Calu3 (cell line): ENCODE measurements at regions of chr3 and their contacts with region 1.

Region 1: GRCh38 chr3:132006605-132007204 is 28.1 kb downstream of the CPNE4 start:
- DNase-seq: peak; percentile 78
- H3K4me3 Mint-ChIP-seq: no peak overlapping the region
- H3K27ac Mint-ChIP-seq: no peak overlapping the region
- H3K4me1 Mint-ChIP-seq: peaks cover 33% of the 10 kb centered on the region
- H3K27me3 Mint-ChIP-seq: no peaks in the 10 kb centered on the region
- CTCF ChIP-seq: peak; percentile 86

Region 2: DNA sequence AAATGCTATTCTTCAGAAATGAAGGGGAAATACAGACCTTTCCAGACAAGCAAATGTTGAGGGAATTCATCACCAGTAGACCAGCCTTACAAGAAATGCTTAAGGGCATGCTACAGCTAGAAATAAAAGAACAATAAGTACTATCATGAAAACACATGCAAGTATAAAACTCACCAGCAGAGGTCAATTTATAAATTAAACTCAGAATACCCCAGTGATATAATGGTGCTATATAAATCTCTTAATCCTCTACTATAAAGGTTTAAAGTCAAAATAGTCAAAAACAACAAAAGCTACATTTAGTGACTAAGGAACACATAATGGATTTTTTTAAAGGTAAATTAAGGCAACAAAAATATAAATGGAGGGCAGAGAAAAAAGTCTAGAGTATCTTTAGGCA is 114.4 kb before region 1 on chr3:
- CTCF ChIA-PET with region 1: no interaction called
- intact Hi-C with region 1: loop called (anchors 5 kb)
- DNase-seq: no peak
- H3K4me3 Mint-ChIP-seq: no peak overlapping the region
- H3K27ac Mint-ChIP-seq: no peak overlapping the region
- H3K4me1 Mint-ChIP-seq: no peaks in the 10 kb centered on the region
- H3K27me3 Mint-ChIP-seq: no peaks in the 10 kb centered on the region
- CTCF ChIP-seq: peak; percentile 25

Region 3: DNA sequence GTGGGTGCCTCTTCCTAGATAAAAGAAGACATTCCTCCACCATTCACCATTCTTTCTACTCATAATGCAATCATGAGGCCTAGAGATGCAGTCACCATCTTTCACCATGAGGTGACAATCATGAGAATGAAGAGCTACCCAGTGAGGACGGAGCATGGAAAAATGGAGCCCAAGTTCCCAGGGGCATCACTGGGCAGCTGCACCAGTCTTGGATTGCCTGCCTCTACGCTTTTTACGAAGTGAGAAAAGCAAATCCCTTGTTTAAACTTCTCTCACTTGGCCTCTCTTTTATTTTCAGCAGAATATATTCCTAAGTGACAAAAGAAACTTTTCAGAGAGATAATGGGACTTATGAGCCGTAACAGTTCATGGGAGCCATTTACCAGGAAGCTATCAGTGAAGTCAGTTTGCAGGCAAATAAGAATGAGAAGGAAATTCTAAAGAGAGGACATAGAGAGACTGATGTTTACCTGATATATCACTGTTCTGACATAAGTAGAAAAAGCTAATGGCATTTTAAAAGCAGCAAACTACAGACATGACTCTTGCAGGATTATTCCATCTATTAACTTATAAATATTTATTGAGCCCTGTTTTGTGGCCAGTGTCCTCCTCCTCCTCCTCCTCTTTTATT is 118.1 kb after region 1 on chr3:
- CTCF ChIA-PET with region 1: no interaction called
- intact Hi-C with region 1: no loop called
- DNase-seq: no peak
- H3K4me3 Mint-ChIP-seq: no peak overlapping the region
- H3K27ac Mint-ChIP-seq: no peak overlapping the region
- H3K4me1 Mint-ChIP-seq: peaks cover 12% of the 10 kb centered on the region
- H3K27me3 Mint-ChIP-seq: no peaks in the 10 kb centered on the region
- CTCF ChIP-seq: no peak